HCT116 (cell line): ENCODE measurements at regions of chr17 and their contacts with region 1.

Region 1: DNA sequence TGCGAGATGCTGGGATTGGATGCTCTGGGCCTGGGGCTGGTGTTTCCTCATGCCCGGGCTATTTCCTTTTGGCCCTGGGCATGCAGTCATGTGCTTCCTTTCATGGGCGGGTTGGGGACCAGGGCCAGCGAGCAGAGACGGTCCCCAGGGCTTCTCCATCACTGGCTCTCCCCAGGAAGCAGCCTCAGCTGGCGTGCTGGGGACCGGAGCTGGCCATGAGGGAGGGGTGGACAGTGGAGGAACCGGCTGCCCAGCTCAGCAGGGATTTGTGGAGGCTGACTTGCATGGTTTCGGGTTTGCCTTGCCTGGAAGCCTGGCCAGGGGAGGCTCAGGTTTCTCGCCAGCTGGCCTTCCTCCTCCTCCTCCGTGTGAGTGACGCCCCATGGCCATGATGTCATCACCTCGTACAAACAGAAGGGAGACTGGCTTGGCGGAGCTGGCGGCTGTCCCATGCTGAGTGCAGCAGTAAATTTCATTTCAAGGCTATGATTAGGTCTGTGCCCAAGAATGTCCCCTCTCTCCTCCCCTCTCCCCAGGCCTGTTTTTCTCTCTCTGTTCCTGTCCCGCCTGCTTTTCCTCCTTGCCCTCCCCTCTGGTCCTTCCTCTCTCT is 8.9 kb upstream of the TIMP2 start:
- DNase-seq: no peak
- ATAC-seq: peak; percentile 41
- H3K4me3 ChIP-seq: peak overlapping the region in 1 of 2 experiments; percentile 27; a peak in 2 of 4 replicates
- H3K27ac ChIP-seq: peak overlapping the region; percentile 40; the same call in 1 of the 2 replicates
- H3K4me1 ChIP-seq: peaks cover 26 to 76% of the 10 kb centered on the region in 2 experiments
- H3K27me3 ChIP-seq: no peaks in the 10 kb centered on the region
- CTCF ChIP-seq: no peak
- POLR2A ChIP-seq: no peak
- RAD21 ChIP-seq: no peak

Region 2: GRCh38 chr17:78923660-78924453 is 10.2 kb before region 1 on chr17:
- CTCF ChIA-PET with region 1: no interaction called
- POLR2A ChIA-PET with region 1: interaction called, 12 read pairs
- RAD21 ChIA-PET with region 1: no interaction called
- intact Hi-C with region 1: no loop called
- DNase-seq: peak; percentile 69
- ATAC-seq: peak; percentile 85
- H3K4me3 ChIP-seq: peak overlapping the region; percentile 71 to 76
- H3K27ac ChIP-seq: peak overlapping the region; percentile 32; the same call in 1 of the 2 replicates
- H3K4me1 ChIP-seq: peaks cover 15 to 43% of the 10 kb centered on the region in 2 experiments
- H3K27me3 ChIP-seq: no peaks in the 10 kb centered on the region
- CTCF ChIP-seq: no peak
- POLR2A ChIP-seq: no peak
- RAD21 ChIP-seq: no peak